GM12878 (cell line): ENCODE measurements at regions of chr17 and their contacts with region 1.

Region 1: DNA sequence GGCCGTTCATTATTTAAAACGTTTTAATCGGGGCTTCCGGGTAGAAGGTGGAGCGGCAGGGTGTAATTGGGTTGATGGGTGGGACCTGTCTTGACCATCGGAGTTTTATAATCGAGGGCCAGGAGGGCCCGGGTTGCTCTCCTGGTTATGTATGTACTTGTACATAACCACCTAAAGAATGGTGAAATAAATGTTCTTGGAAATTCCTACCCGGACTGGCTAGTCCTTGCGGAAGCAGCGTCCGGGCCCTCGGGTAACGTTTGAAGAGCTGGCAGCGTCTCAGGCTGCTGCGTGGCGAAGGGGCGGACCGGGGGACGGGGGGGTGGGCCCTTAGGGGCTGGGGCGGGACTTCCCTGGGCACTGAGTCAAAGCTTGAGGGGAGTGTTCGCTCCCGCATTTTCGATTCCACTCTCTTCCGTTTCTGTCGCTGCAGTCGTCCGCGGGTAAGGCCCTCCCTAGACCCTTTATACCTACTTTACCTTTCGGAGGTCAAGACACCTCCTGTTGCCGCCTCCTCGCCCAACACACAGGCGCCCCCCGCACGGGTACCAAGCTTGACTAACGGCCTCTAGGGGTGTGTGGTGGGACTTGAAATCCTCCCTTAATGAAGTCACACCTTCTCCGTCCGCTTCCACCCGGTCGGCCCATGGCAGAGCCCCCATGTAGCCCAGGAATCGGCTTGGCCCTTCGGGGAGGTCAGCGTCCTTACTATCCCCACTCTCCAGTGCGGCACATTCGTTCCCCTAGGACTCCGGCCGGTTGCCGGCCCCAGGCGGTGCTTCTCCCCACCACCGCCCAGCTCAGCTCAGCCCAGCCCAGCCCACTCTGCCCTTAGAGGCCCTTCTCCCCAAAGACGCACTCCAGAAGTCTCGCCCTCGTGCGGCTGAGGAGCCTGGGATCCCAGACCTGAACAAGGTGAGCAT is at the start of gene TMEM106A:
- DNase-seq: peak; percentile 59
- ATAC-seq: peak; percentile 90
- H3K4me3 ChIP-seq: peak within 1 kb of the TSS; percentile 75
- H3K27ac ChIP-seq: peak within 1 kb of the TSS; percentile 88
- H3K4me1 ChIP-seq: peaks cover 10% of the 10 kb centered on the region
- H3K27me3 ChIP-seq: no peaks in the 10 kb centered on the region
- CTCF ChIP-seq: peak; percentile 29 to 45 (median 44); a peak in 3 of 6 replicates
- EP300 ChIP-seq: no peak
- POLR2A ChIP-seq: peak; percentile 79
- RAD21 ChIP-seq: 0 out of 2 replicates have a peak, but pooled peaks have one; percentile 4
- polyA plus RNA-seq, gene TMEM106A: 2.3 to 2.6 TPM

Region 2: DNA sequence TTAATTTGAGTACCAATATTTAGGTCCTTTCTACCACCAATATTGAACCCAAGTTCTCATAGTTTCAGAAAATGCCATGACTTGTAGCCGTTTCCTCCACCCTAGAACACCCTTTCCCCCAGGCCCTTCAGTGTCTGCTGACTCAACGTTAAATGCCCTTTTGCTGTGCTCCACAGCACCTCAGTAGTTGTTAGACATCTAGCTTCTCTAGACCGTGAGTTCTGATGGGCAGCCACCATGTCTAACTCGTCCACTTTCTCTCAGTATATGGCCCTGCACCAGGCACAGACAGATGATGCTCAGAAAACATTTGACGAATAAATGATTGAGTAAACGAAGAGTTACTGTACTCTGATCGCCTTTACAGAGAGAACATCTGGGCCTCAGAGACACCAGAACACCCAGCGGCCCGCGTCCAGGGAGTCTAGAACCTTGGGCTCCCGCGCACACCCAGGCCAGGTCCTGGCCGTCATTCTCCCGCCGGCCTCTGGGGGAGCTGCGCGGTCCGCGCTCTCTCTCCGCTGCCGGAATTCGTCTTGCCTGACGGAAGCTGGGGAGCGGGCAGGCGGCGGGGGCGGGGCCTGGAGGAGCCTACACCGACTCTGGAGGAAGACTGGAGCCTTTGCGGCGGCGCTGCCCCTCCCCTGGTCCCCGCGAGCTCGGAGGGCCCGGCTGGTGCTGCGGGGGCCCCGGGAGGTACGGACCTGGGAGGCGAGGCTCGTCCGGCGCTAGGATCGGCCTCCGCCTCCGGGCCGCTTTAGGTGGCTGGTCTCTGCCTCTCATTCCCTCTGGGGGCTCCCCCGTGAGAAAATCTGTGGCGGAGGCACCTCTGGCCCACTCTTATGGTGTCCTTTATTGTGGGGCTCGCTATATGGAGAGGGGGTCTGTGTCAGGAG is 1192.0 kb before region 1 on chr17 and contains the start of gene NKIRAS2:
- CTCF ChIA-PET with region 1: no interaction called
- POLR2A ChIA-PET with region 1: no interaction called
- RAD21 ChIA-PET with region 1: no interaction called
- SMC1A ChIA-PET with region 1: no interaction called
- in situ Hi-C with region 1: loop called (anchors 25 kb)
- intact Hi-C with region 1: no loop called
- DNase-seq: peak; percentile 50
- ATAC-seq: peak; percentile 84
- H3K4me3 ChIP-seq: peak within 1 kb of the TSS; percentile 88
- H3K27ac ChIP-seq: peak within 1 kb of the TSS; percentile 76
- H3K4me1 ChIP-seq: peaks cover 28% of the 10 kb centered on the region
- H3K27me3 ChIP-seq: no peaks in the 10 kb centered on the region
- CTCF ChIP-seq: peak; percentile 92 to 98 (median 98); a peak in 5 of 6 replicates
- EP300 ChIP-seq: no peak
- POLR2A ChIP-seq: peak; percentile 87
- RAD21 ChIP-seq: no peak
- polyA plus RNA-seq, gene NKIRAS2: 6.4 to 6.9 TPM

Region 3: DNA sequence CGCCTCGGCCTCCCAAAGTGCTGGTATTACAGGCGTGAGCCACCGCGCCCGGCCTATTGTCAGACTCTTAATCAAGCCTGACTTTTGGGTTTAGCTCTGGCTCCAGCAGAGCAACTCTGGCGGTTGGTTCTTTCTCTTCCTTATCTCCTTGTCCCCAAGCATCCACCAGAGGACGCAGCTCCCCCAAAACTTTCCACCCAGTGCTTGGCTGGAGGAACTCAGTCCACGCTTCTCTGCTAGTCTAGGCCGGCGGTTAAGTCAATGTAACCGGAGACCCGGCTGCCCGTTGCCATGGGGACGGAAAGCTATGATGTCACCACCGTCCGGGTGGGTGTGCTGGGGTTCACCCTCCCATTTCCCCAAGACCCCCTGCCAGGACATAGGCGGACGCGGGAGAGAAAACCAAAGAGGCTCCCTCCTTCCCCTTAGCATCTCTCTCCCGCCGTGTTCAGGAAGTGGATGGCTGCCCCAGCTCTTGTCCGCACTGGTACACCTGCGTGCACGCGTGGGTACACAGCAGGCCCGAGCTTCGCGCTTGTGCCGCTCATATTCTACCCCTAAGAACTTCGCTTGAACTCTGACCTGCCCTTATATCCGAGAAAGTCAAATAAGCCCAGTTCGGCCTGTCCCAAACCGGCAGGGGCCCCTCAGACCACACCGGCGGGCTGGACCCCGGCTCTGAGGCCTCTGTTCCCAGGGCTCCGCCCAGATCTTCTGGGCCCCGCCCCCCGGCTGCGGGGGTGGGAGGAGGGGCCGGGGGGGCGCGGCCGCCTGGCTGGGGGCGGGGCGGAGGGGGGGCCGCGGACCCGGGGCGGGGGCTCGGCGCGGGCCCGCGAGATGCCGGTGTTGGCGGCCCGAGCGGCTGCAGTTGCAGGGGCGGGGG is 187.1 kb before region 1 on chr17 and contains the start of gene RND2:
- CTCF ChIA-PET with region 1: interaction called, 3 read pairs
- POLR2A ChIA-PET with region 1: no interaction called
- RAD21 ChIA-PET with region 1: no interaction called
- SMC1A ChIA-PET with region 1: no interaction called
- in situ Hi-C with region 1: loop called (anchors 10 kb)
- intact Hi-C with region 1: no loop called
- DNase-seq: peak; percentile 40
- ATAC-seq: peak; percentile 77
- H3K4me3 ChIP-seq: peak within 1 kb of the TSS; percentile 81; the same call in 1 of the 2 replicates
- H3K27ac ChIP-seq: no peak within 1 kb of the TSS
- H3K4me1 ChIP-seq: peaks cover 7% of the 10 kb centered on the region; the same call in 1 of the 2 replicates
- H3K27me3 ChIP-seq: no peaks in the 10 kb centered on the region
- CTCF ChIP-seq: peak; percentile 70 to 82 (median 71)
- EP300 ChIP-seq: no peak
- POLR2A ChIP-seq: no peak
- RAD21 ChIP-seq: peak; percentile 74
- polyA plus RNA-seq, gene RND2: not detected

Region 4: DNA sequence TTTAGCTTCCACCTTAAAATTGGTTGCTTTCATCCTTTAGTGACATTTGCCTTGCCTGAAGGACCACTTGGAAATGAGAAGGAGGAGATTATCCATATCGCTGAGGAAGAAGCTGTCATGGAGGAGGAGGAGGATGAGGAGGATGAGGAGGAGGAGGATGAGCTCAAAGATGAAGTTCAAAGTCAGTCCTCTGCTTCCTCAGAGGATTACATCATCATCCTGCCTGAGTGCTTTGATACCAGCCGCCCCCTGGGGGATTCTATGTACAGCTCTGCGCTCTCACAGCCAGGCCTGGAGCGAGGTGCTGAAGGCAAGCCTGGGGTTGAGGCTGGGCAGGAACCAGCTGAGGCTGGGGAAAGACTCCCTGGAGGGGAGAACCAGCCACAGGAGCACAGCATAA is 11.6 kb before region 1 on chr17:
- CTCF ChIA-PET with region 1: interaction called, 5 read pairs
- POLR2A ChIA-PET with region 1: interaction called, 3 read pairs
- RAD21 ChIA-PET with region 1: interaction called, 3 read pairs
- SMC1A ChIA-PET with region 1: interaction called, 20 read pairs
- in situ Hi-C with region 1: no loop called
- intact Hi-C with region 1: no loop called
- DNase-seq: no peak
- ATAC-seq: no peak
- H3K4me3 ChIP-seq: no peak overlapping the region
- H3K27ac ChIP-seq: no peak overlapping the region
- H3K4me1 ChIP-seq: no peaks in the 10 kb centered on the region
- H3K27me3 ChIP-seq: no peaks in the 10 kb centered on the region
- CTCF ChIP-seq: no peak
- EP300 ChIP-seq: no peak
- POLR2A ChIP-seq: no peak
- RAD21 ChIP-seq: no peak

Region 5: DNA sequence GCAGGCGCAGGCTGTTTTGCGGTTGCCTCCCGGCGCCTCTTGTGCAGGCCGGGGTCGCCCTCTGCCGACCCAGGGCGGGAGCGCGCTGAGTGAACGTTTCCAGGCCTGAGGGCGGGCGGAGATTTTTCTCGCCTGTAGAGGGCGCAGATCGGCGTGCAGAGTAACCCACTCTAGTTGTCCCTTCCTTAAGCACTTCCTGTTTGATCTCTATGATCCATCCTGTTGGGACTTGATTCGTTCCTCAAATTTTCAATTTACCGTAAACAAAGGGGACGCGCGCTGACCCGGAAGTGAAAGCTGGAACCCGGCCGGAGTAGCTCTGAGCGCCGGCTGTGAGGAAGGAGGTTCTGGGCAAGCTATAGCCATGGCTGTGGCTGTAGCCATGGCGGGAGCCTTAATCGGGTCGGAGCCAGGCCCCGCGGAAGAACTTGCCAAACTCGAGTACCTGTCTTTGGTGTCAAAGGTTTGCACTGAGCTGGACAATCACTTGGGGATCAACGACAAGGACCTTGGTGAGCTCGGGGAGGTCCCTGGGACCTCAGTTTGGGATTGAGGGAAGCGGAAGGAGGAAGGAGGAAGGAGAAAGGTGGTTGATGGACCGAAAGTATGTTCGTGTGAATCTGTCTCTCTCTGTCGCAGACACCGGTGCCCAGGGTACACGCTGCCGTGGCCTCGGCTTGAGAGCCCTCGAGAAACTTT is 272.1 kb after region 1 on chr17 and contains the start of gene DHX8:
- CTCF ChIA-PET with region 1: interaction called, 4 read pairs
- POLR2A ChIA-PET with region 1: no interaction called
- RAD21 ChIA-PET with region 1: no interaction called
- SMC1A ChIA-PET with region 1: no interaction called
- in situ Hi-C with region 1: loop called (anchors 5 kb)
- intact Hi-C with region 1: no loop called
- DNase-seq: peak; percentile 97
- ATAC-seq: peak; percentile 96
- H3K4me3 ChIP-seq: peak within 1 kb of the TSS; percentile 93
- H3K27ac ChIP-seq: peak within 1 kb of the TSS; percentile 96
- H3K4me1 ChIP-seq: peaks cover 13% of the 10 kb centered on the region
- H3K27me3 ChIP-seq: no peaks in the 10 kb centered on the region
- CTCF ChIP-seq: peak; percentile 100; a peak in 5 of 6 replicates
- EP300 ChIP-seq: peak in 1 of 2 experiments; percentile 43; a peak in 1 of 4 replicates
- POLR2A ChIP-seq: peak; percentile 91
- RAD21 ChIP-seq: peak; percentile 99
- polyA plus RNA-seq, gene DHX8: 27.6 to 31.6 TPM

Region 6: DNA sequence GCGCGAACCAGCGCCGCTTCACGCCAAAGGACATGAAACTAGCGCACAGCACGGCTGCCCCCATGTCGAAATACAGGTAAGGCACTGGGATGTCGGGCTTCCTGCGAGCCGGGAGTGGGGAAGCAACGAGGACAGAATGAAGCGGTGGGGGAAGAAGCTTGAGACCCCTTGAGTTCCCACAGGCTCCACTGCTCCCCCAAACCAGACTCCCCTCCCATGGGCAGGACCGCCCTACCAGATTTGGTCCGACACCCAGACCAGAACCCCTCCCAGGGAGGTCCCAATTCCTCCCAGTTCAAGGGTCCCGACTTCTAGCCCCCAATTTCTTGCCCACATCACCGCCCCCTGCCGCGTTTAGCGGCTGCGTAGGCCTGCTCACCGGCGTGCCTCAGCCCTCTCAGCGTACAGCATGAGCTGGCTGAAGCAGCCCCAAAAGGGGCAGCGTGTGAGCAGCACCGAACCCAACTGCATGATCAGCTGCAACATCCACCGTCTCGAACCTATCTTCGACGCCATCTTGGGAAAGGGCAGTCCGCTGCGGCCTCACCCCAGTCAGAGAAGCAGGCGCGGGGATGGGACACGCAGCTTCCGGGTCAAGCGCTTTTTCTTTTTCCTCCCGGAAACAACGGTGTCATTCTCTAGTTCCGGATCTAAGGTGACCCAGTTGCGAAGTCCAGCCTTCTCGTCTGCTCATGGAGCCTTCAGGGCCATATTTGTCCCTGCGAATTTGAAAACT is 802.9 kb after region 1 on chr17 and contains the start of gene TMEM101:
- CTCF ChIA-PET with region 1: no interaction called
- POLR2A ChIA-PET with region 1: no interaction called
- RAD21 ChIA-PET with region 1: no interaction called
- SMC1A ChIA-PET with region 1: no interaction called
- in situ Hi-C with region 1: loop called (anchors 25 kb)
- intact Hi-C with region 1: no loop called
- DNase-seq: peak; percentile 74
- ATAC-seq: peak; percentile 98
- H3K4me3 ChIP-seq: peak within 1 kb of the TSS; percentile 99
- H3K27ac ChIP-seq: peak within 1 kb of the TSS; percentile 85
- H3K4me1 ChIP-seq: peaks cover 12% of the 10 kb centered on the region
- H3K27me3 ChIP-seq: no peaks in the 10 kb centered on the region
- CTCF ChIP-seq: no peak
- EP300 ChIP-seq: 0 out of 4 replicates have a peak, but pooled peaks of 1 of the 2 experiments have one; percentile 31
- POLR2A ChIP-seq: peak; percentile 90
- RAD21 ChIP-seq: no peak
- polyA plus RNA-seq, gene TMEM101: 70.0 to 72.5 TPM

Region 7: DNA sequence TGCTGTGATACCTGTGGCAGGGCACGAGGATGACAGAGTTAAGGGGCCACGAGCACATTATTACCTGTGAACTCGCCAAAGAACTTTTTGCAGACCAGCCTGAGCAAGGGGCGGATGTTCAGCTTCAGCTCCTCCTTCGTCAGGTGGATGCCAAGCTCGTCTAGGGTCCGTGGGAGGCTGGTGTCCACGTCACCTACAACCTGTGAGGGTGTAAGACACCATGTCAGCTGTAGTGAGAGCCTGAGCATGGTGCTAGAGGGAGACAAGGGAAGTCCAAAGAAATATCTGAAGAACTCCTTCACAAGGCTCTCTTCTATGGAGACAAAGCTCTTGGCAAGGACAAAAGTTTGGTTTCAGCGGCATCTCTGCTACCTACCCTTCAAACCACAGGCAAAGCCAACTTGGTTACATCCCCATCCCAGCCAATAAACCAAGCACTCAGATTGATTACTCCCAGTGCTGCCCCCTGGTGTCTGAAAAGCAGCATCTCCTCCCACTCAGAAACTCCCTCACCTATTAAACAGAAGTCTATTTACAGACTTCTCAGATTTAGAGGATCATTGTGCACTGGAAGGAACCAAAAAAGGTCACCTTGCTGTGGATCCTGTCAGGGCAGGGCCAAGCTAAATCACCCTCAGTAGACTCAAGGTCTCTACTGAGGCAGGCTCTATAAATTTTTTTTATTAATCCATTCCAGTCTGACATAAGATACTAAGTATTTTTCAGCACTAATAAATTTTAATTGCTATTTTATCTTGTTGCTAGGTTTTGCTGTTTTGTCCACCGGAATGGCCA is 1653.3 kb after region 1 on chr17:
- CTCF ChIA-PET with region 1: no interaction called
- POLR2A ChIA-PET with region 1: no interaction called
- RAD21 ChIA-PET with region 1: no interaction called
- SMC1A ChIA-PET with region 1: no interaction called
- in situ Hi-C with region 1: loop called (anchors 25 kb)
- intact Hi-C with region 1: no loop called
- DNase-seq: no peak
- ATAC-seq: peak; percentile 92
- H3K4me3 ChIP-seq: no peak overlapping the region
- H3K27ac ChIP-seq: no peak overlapping the region
- H3K4me1 ChIP-seq: no peaks in the 10 kb centered on the region
- H3K27me3 ChIP-seq: no peaks in the 10 kb centered on the region
- CTCF ChIP-seq: peak; percentile 72 to 88 (median 78)
- EP300 ChIP-seq: no peak
- POLR2A ChIP-seq: no peak
- RAD21 ChIP-seq: peak; percentile 58